Naive thymus-derived CD4-positive, alpha-beta T cell (primary cell): ENCODE measurements at regions of chr14 and their contacts with region 1.

Region 1: DNA sequence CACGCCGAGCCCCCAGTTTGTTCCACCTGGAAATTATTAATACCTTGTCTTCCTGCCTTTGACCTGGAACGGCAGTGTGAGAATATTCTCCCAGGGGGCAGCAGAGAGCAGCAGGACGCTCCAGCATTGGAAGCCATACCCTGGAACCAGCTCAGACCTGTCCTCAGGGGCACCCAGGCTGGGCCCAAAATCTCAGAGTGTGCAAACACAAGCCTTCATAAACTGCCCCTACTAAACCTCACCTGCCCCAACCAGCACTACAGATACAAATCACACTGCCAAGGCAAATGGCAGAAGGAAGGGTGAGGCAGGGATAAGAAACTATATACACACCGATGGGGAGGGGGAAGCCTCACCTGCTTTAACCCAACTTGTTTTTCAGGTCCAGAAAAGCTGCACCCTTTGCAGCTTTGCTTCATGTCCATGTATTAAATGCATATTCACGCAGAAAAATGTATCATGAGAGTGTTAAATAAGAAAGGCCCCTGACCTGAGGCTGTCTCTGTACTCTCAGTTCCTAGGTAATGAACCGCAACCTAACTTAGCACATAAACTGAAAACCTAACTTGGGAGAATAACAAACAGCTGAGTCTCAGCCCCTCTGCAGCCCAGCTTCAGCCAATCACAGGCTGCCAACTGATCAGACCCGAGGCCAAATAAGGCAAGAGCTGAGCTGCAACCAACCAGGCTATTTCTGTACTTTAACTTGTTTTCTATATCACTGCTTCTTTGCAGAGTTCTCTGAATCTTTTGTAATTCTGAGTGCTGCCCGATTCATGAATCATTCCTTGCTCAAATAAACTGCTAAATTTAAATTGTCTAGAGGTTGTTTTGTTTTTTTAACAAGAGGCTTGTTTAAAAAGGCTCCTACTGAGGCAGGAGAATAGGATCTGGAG is 130.1 kb downstream of the SPTSSA start:
- DNase-seq: peak; percentile 11 to 62 (median 44)
- ATAC-seq: peak; percentile 80
- H3K4me3 ChIP-seq: no peak overlapping the region
- H3K4me3 Mint-ChIP-seq: no peak overlapping the region
- H3K27ac ChIP-seq: no peak overlapping the region
- H3K27ac Mint-ChIP-seq: peak overlapping the region in 3 of 9 donors; percentile 13 to 54 (median 30)
- H3K4me1 ChIP-seq: no peaks in the 10 kb centered on the region
- H3K4me1 Mint-ChIP-seq: peaks cover 0 to 19% (median 4%) of the 10 kb centered on the region in 7 donors
- H3K27me3 ChIP-seq: no peaks in the 10 kb centered on the region
- H3K27me3 Mint-ChIP-seq: no peaks in the 10 kb centered on the region

Region 2: DNA sequence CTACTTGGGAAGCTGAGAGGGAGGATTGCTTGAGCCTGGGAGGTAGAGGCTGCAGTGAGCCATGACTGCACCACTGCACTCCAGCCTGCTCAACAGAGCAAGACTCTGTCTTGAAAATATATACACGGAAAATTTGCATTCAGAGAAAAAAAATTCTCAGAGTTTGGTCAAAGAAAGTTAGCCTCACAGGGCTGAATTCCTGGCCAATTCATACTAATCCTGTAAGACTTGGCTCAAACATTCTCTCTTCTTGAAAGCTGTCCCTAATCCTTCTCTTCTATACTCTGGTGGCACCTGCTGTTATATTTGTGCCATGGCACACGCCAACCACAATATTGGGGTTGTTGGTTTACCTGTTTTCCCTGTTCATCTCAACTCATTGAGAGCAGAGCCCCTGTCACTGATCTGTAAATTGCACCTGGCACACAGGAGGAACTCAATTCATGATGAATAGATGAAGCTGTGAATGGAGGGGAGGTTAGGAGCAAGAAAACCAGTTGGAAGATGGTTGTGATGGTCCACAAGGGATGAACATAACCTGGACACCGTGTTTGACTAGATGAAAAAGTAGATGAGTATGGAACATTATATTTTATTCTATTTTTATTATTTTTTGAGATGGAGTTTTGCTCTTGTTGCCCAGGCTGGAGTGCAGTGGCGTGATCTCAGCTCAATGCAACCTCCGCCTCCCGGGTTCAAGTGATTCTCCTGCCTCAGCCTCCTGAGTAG is 166.9 kb after region 1 on chr14:
- CTCF ChIA-PET with region 1: interaction called, 3 read pairs
- POLR2A ChIA-PET with region 1: no interaction called
- intact Hi-C with region 1: loop called in 1 of 2 experiments (anchors 1 kb)
- DNase-seq: peak in 1 of 9 donors; percentile 8
- ATAC-seq: peak; percentile 48
- H3K4me3 ChIP-seq: no peak overlapping the region
- H3K4me3 Mint-ChIP-seq: no peak overlapping the region
- H3K27ac ChIP-seq: no peak overlapping the region
- H3K27ac Mint-ChIP-seq: peak overlapping the region in 1 of 9 donors; percentile 82
- H3K4me1 ChIP-seq: no peaks in the 10 kb centered on the region
- H3K4me1 Mint-ChIP-seq: peaks cover 0 to 4% (median 0%) of the 10 kb centered on the region in 7 donors
- H3K27me3 ChIP-seq: no peaks in the 10 kb centered on the region
- H3K27me3 Mint-ChIP-seq: peaks cover 0 to 3% (median 0%) of the 10 kb centered on the region in 5 donors

Region 3: DNA sequence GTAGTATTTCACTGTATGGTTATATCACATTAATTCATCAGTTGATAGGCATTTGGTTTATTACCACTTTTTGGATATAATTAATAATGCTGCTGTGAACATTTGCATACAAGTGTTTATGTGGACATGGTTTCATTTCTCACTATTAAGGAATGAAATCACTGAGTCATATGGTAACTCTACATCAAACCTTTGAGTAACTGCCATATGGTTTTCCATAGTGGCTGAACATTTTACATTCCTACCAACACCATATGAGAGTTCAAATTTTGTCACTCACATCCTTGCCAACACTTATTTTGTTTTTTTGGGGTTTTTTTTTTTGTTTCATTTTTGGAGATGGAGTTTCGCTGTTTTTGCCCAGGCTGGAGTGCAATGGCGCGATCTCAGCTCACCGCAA is 237.8 kb after region 1 on chr14:
- CTCF ChIA-PET with region 1: no interaction called
- POLR2A ChIA-PET with region 1: no interaction called
- intact Hi-C with region 1: loop called in 1 of 2 experiments (anchors 5 kb)
- DNase-seq: no peak
- ATAC-seq: no peak
- H3K4me3 ChIP-seq: no peak overlapping the region
- H3K4me3 Mint-ChIP-seq: no peak overlapping the region
- H3K27ac ChIP-seq: no peak overlapping the region
- H3K27ac Mint-ChIP-seq: peak overlapping the region in 2 of 9 donors; percentile 2 to 53
- H3K4me1 ChIP-seq: no peaks in the 10 kb centered on the region
- H3K4me1 Mint-ChIP-seq: no peaks in the 10 kb centered on the region
- H3K27me3 ChIP-seq: no peaks in the 10 kb centered on the region
- H3K27me3 Mint-ChIP-seq: no peaks in the 10 kb centered on the region

Region 4: GRCh38 chr14:34722717-34723545 is 391.0 kb after region 1 on chr14:
- CTCF ChIA-PET with region 1: no interaction called
- POLR2A ChIA-PET with region 1: no interaction called
- intact Hi-C with region 1: loop called in 1 of 2 experiments (anchors 1 kb)
- DNase-seq: peak in 6 of 9 donors; percentile 21 to 54 (median 32)
- ATAC-seq: peak; percentile 66
- H3K4me3 ChIP-seq: no peak overlapping the region
- H3K4me3 Mint-ChIP-seq: no peak overlapping the region
- H3K27ac ChIP-seq: no peak overlapping the region
- H3K27ac Mint-ChIP-seq: peak overlapping the region in 1 of 9 donors; percentile 8
- H3K4me1 ChIP-seq: no peaks in the 10 kb centered on the region
- H3K4me1 Mint-ChIP-seq: peaks cover 0 to 10% (median 0%) of the 10 kb centered on the region in 7 donors
- H3K27me3 ChIP-seq: no peaks in the 10 kb centered on the region
- H3K27me3 Mint-ChIP-seq: peaks cover 0 to 24% (median 0%) of the 10 kb centered on the region in 5 donors